ENCODE measurements at regions of chr17 and their contacts with region 1.

Region 1: GRCh38 chr17:41930009-41930832 is at the start of gene ODAD4:
- H3K4me3 Mint-ChIP-seq: peak within 1 kb of the TSS; percentile 86
- H3K27ac Mint-ChIP-seq: peak within 1 kb of the TSS; percentile 95
- H3K4me1 Mint-ChIP-seq: peaks cover 47% of the 10 kb centered on the region
- H3K27me3 Mint-ChIP-seq: no peaks in the 10 kb centered on the region

Region 2: DNA sequence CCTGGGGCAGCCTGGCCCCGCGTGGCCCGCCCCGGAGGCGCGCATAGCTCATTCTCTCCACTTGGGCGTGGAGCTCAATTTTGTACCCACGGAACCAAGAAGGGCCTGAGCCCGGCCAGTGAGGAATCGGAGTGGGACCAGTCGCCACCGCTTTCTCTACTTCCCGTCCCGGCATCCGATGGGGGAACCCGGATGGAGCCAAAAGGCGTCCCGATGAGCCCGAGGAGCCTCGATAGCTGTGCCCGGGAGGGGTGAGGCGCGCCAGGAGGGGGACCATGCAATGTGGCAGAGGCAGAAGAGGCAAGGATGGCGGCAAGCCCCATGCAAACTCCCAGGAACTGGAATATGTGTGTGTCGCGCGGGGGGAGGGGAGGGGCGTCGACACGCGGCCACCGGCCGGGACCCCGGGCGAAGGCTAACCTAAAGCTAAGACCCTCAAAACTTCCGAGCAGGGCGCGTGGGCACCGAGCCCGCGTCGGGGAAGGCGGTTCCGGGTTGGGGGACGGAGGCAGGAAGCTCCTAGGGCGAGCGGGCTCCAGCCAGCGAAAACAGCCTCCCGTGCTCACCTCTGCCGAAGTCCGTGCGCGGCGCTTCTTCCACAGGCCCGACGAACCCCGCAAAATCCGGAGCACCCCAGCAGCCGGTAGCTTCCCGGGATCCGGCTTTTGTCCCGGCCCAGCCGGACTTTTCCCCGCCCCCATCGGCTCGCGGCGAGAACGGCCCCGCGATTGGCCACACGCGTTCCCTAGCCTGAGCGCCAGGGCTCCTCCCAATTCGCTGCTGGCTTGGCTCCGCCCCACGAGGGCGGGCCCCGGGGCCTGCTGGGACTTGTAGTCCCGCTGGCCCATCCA is 11.7 kb before region 1 on chr17 and contains the start of gene ACLY:
- intact Hi-C with region 1: loop called (anchors 1 kb)
- H3K4me3 Mint-ChIP-seq: peak within 1 kb of the TSS; percentile 99
- H3K27ac Mint-ChIP-seq: peak within 1 kb of the TSS; percentile 91
- H3K4me1 Mint-ChIP-seq: peaks cover 54% of the 10 kb centered on the region
- H3K27me3 Mint-ChIP-seq: no peaks in the 10 kb centered on the region